Left ventricle myocardium inferior (tissue), 1 donor: ENCODE measurements at regions of chr11 and their contacts with region 1.

Region 1: GRCh38 chr11:5808500-5809121 is at the start of gene OR52N2:
- DNase-seq: peak; percentile 54
- H3K4me3 ChIP-seq: peak within 1 kb of the TSS; percentile 67
- H3K27ac ChIP-seq: no peak within 1 kb of the TSS
- H3K4me1 ChIP-seq: peaks cover 12% of the 10 kb centered on the region
- H3K27me3 ChIP-seq: peaks cover 8% of the 10 kb centered on the region
- CTCF ChIP-seq: peak; percentile 84
- total RNA-seq, gene OR52N2: not detected

Region 2: GRCh38 chr11:5473921-5474320 is 334.7 kb before region 1 on chr11:
- intact Hi-C with region 1: loop called (anchors 5 kb)
- DNase-seq: no peak
- H3K4me3 ChIP-seq: no peak overlapping the region
- H3K27ac ChIP-seq: no peak overlapping the region
- H3K4me1 ChIP-seq: no peaks in the 10 kb centered on the region
- H3K27me3 ChIP-seq: no peaks in the 10 kb centered on the region
- CTCF ChIP-seq: no peak